IMR-90 (cell line): ENCODE measurements at regions of chr3 and their contacts with region 1.

Region 1: GRCh38 chr3:141875374-141875892 is 1.0 kb upstream of the ATP1B3 start:
- DNase-seq: peak; percentile 74
- ATAC-seq: peak; percentile 74
- H3K4me3 ChIP-seq: peak overlapping the region; percentile 96
- H3K27ac ChIP-seq: peak overlapping the region; percentile 87
- H3K4me1 ChIP-seq: peaks cover 2% of the 10 kb centered on the region
- H3K27me3 ChIP-seq: no peaks in the 10 kb centered on the region
- CTCF ChIP-seq: peak; percentile 88
- POLR2A ChIP-seq: no peak
- RAD21 ChIP-seq: peak; percentile 63

Region 2: DNA sequence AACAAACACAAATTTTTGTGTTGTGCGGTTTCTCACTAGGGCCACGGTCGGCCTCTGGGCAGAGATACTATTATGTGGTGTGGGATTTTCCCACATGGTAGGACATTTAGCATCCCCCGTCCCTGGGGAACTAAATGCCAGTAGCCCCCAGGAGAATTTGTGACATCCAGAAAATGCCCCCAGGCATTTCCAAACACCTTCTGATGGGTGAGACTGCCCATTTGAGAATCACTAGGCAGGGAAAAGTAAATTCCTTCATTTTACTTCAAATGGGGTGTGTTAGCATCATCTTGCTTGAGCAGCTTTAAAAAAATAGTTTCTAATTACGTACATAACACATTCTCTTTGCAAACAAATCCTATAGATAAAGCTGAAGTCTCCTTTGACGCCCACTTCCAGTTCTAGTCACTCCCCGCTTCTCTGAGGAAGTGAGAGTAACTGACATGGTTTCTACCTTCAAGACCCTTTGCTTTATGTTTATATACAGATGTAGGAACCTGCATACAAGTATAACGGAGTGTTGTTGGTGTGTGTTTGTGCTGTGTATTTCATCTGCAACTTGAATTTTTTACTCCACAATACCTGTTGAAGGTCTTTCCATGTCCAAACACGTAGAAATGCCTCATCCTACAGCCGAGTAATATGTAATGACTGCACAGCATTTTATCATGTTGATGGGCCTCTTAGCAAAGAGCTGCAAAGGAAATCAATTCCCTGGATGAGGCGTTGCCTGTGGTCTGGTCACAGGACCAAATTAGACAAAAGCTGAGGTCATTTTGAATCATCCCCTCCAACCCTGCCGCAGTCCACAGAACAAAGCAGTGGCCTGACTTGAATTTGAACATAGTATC is 538.5 kb before region 1 on chr3:
- CTCF ChIA-PET with region 1: no interaction called
- POLR2A ChIA-PET with region 1: no interaction called
- dilution Hi-C with region 1: no loop called
- in situ Hi-C with region 1: loop called (anchors 25 kb)
- intact Hi-C with region 1: no loop called
- DNase-seq: peak; percentile 87
- ATAC-seq: peak; percentile 36
- H3K4me3 ChIP-seq: no peak overlapping the region
- H3K27ac ChIP-seq: no peak overlapping the region; the same call in 1 of the 2 replicates
- H3K4me1 ChIP-seq: peaks cover 33% of the 10 kb centered on the region
- H3K27me3 ChIP-seq: no peaks in the 10 kb centered on the region
- CTCF ChIP-seq: no peak
- POLR2A ChIP-seq: no peak
- RAD21 ChIP-seq: no peak

Region 3: GRCh38 chr3:141575879-141576743 is 299.3 kb before region 1 on chr3:
- CTCF ChIA-PET with region 1: interaction called, 4 read pairs
- POLR2A ChIA-PET with region 1: no interaction called
- dilution Hi-C with region 1: no loop called
- in situ Hi-C with region 1: no loop called
- intact Hi-C with region 1: loop called (anchors 1 kb)
- DNase-seq: peak; percentile 40
- ATAC-seq: peak; percentile 79
- H3K4me3 ChIP-seq: no peak overlapping the region
- H3K27ac ChIP-seq: no peak overlapping the region
- H3K4me1 ChIP-seq: peaks cover 2% of the 10 kb centered on the region; the same call in 1 of the 2 replicates
- H3K27me3 ChIP-seq: no peaks in the 10 kb centered on the region
- CTCF ChIP-seq: peak; percentile 55
- POLR2A ChIP-seq: no peak
- RAD21 ChIP-seq: peak; percentile 56

Region 4: DNA sequence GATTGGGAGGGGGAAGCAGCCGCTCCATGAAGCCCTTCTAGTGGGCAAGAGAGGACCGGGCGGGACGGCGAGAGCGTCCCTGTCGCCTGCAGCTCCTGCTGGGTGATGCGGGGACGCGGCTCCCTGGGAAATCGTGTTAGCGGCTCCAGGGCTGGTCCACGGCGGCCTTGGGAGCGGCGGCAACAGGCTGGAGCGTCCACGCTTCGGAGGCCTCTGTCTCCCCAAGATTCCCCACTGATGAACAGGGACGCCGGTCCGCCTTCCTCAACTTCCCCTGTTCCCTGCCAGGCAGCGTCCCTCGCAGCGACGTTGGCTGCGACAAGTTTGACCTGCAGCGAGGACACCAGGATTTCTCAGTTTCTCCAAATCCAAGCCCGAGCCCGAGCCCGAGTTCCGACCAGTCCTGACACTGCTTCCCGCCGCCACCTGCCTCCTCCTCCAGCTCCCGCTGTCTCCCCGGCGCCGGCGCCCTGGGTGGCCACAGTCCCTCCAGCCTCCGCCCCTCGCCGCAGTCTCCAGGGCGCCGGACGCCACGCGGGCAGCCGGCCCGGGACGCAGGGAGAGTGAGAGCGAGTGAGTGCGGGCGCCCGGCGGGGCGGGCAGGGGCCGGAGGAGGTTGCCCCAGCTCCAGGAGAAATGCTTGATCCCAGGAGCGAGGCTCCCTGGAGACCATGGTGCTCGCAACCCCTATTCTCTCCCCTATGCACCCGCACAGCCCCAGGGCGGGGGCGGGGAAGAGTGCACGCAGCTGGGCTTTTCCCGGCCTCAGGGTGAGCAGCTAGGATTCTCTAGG is 215.4 kb before region 1 on chr3:
- CTCF ChIA-PET with region 1: no interaction called
- POLR2A ChIA-PET with region 1: interaction called, 7 read pairs
- dilution Hi-C with region 1: no loop called
- in situ Hi-C with region 1: no loop called
- intact Hi-C with region 1: loop called (anchors 2 kb)
- DNase-seq: peak; percentile 41
- ATAC-seq: peak; percentile 91
- H3K4me3 ChIP-seq: peak overlapping the region; percentile 63
- H3K27ac ChIP-seq: peak overlapping the region; percentile 30; the same call in 1 of the 2 replicates
- H3K4me1 ChIP-seq: peaks cover 5% of the 10 kb centered on the region; the same call in 1 of the 2 replicates
- H3K27me3 ChIP-seq: no peaks in the 10 kb centered on the region
- CTCF ChIP-seq: no peak
- POLR2A ChIP-seq: no peak
- RAD21 ChIP-seq: no peak